ENCODE measurements at regions of chr19 and their contacts with region 1.

Region 1: DNA sequence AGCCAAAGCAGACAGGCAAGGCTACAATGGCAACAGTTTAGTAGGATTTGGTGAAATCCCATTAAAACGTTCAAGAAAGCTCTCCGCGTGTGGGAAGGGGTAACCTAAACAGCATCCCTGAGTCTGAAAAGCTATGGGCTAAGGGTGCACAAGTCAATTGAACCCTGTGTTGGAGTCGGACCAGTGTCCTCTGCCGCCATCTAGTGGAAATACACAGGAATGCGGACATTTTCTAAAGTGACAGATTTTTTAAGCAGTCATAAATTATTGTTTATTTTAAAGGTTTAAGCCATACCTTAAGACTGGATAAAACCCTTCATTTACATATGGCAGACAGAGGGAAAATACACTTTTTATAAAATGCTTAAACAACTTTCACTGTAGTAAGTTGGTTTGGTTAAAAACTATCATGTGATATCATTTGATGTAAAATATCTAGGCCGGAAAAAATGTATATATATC is 26.5 kb upstream of the LSM14A start:
- DNase-seq: peak; percentile 30
- H3K4me3 ChIP-seq: no peak overlapping the region
- H3K27ac ChIP-seq: no peak overlapping the region
- H3K4me1 ChIP-seq: no peaks in the 10 kb centered on the region
- H3K27me3 ChIP-seq: no peaks in the 10 kb centered on the region
- CTCF ChIP-seq: peak; percentile 83 to 88

Region 2: DNA sequence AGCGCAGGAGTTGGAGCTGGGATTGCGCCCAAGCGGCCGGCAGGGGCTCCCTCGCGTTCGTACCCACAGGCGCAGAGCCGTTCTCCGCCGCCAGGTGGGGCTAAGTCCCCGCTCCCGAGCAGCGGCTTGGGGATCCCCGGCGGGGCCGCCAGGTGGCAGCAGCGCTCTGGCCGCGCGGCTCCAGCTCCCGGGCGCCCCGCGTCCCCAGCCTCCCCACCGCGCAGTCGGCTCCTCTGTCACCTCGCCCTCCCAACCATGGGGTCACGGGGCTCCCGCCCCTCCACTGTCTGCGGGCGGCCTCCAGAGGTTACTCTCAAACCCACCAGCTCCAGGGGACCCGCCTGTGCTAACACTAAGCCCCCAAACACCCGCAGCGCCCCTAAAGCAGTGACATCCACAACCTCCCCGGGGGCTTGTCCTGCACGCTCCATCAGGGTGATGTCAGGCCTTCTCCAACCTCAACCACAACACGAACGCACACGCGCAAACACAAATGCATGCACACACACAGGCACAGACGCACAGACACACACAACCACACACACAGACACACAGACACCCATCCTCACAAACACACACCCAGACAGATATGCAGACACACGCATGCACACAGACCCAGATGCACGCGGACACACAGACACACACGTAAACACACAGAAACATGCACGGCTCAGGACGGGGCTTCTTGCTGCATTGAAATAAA is 367.5 kb before region 1 on chr19:
- CTCF ChIA-PET with region 1: no interaction called
- dilution Hi-C with region 1: no loop called
- in situ Hi-C with region 1: no loop called
- intact Hi-C with region 1: loop called (anchors 1 kb)
- DNase-seq: peak; percentile 52
- H3K4me3 ChIP-seq: peak overlapping the region in 1 of 3 experiments; percentile 14
- H3K27ac ChIP-seq: no peak overlapping the region
- H3K4me1 ChIP-seq: peaks cover 10% of the 10 kb centered on the region
- H3K27me3 ChIP-seq: no peaks in the 10 kb centered on the region
- CTCF ChIP-seq: peak; percentile 99 to 100

Region 3: GRCh38 chr19:34041925-34042521 is 103.7 kb before region 1 on chr19:
- CTCF ChIA-PET with region 1: no interaction called
- dilution Hi-C with region 1: no loop called
- in situ Hi-C with region 1: no loop called
- intact Hi-C with region 1: loop called (anchors 5 kb)
- DNase-seq: peak; percentile 20
- H3K4me3 ChIP-seq: no peak overlapping the region
- H3K27ac ChIP-seq: no peak overlapping the region
- H3K4me1 ChIP-seq: no peaks in the 10 kb centered on the region
- H3K27me3 ChIP-seq: no peaks in the 10 kb centered on the region
- CTCF ChIP-seq: peak; percentile 83 to 86

Region 4: DNA sequence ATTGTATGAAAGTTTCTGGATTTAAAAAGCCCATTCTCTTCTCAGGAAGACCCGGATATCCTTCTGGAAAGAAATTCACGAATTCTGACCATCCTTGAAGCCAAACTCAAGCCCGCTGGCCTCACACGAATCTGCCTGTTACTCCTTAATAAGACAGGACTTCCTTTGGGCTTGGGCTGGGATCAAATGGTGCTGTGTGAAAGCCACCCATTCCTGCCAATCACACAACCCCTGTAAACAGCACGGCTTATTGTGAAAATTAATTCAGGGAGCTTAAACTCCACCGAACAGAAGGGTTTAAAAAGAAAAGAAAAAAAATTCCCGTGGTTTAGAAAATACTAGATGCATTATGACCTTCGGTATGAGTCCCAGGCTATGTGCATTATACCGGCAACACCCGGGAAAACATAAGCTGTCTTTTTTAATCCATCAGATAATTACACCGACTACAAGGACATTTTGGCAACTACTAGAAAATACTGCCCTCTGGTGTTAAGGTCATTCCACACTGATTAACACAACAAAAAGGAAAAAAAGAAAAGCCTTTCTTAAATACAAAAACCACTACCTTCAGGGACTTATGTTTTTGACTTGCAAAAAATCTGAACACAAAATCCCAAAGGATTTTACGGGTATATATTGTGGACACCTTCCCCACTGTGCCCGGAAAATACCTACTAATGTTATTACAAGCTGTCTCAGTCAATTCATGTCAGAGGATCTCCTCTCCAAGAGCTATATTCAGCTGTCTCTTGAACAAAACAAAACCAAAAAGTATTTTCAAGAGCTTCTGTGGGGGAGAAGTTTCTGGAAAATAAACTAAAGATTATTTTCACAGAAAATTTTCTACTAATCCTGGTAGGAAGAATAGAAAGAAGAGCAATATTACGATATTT is 49.5 kb before region 1 on chr19:
- CTCF ChIA-PET with region 1: no interaction called
- dilution Hi-C with region 1: no loop called
- in situ Hi-C with region 1: no loop called
- intact Hi-C with region 1: loop called (anchors 1 kb)
- DNase-seq: peak; percentile 18
- H3K4me3 ChIP-seq: no peak overlapping the region
- H3K27ac ChIP-seq: no peak overlapping the region
- H3K4me1 ChIP-seq: no peaks in the 10 kb centered on the region
- H3K27me3 ChIP-seq: no peaks in the 10 kb centered on the region
- CTCF ChIP-seq: peak; percentile 59 to 63

Region 5: GRCh38 chr19:34120846-34121639 is 24.7 kb before region 1 on chr19:
- CTCF ChIA-PET with region 1: no interaction called
- dilution Hi-C with region 1: no loop called
- in situ Hi-C with region 1: no loop called
- intact Hi-C with region 1: loop called (anchors 1 kb)
- DNase-seq: peak; percentile 26
- H3K4me3 ChIP-seq: no peak overlapping the region
- H3K27ac ChIP-seq: no peak overlapping the region
- H3K4me1 ChIP-seq: no peaks in the 10 kb centered on the region
- H3K27me3 ChIP-seq: no peaks in the 10 kb centered on the region
- CTCF ChIP-seq: peak; percentile 79 to 80

Measured in mammary epithelial cell (primary cell).